BJ (cell line): ENCODE measurements at regions of chr2 and their contacts with region 1.

Region 1: GRCh38 chr2:172427256-172427989 is at the start of gene ITGA6:
- DNase-seq: no peak
- H3K4me3 ChIP-seq: peak within 1 kb of the TSS; percentile 74
- H3K27me3 ChIP-seq: peaks cover 2% of the 10 kb centered on the region
- CTCF ChIP-seq: peak; percentile 24; the same call in 1 of the 2 replicates
- polyA plus RNA-seq, gene ITGA6: 2.9 and 5.6 TPM in 2 replicates

Region 2: GRCh38 chr2:172442072-172442895 is 14.9 kb after region 1 on chr2:
- CTCF ChIA-PET with region 1: interaction called, 26 read pairs
- POLR2A ChIA-PET with region 1: no interaction called
- DNase-seq: peak; percentile 83
- H3K4me3 ChIP-seq: no peak overlapping the region
- H3K27me3 ChIP-seq: no peaks in the 10 kb centered on the region
- CTCF ChIP-seq: no peak

Region 3: GRCh38 chr2:172496160-172496608 is 68.8 kb after region 1 on chr2:
- CTCF ChIA-PET with region 1: no interaction called
- POLR2A ChIA-PET with region 1: no interaction called
- DNase-seq: no peak
- H3K4me3 ChIP-seq: no peak overlapping the region
- H3K27me3 ChIP-seq: no peaks in the 10 kb centered on the region
- CTCF ChIP-seq: no peak

Region 4: DNA sequence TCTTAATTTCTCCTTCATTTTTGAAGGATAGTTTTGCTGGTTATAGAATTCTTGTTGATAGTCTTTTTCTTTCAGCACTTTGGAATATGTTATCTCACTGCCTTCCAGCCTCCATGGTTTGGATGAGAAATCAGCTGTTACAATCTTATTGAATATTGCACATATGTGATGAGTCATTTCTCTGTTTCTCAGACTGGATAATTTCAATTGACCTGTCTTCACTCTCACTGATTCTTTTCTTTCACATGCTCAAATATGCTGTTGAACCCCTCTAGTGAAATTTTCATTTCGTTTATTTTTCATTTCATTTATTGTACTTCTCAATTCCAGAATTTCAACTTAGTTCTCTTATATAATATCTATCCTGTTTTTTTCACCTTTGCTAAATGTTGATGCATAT is 150.6 kb after region 1 on chr2:
- CTCF ChIA-PET with region 1: no interaction called
- POLR2A ChIA-PET with region 1: no interaction called
- DNase-seq: no peak
- H3K4me3 ChIP-seq: no peak overlapping the region
- H3K27me3 ChIP-seq: no peaks in the 10 kb centered on the region
- CTCF ChIP-seq: no peak